Activated CD8-positive, alpha-beta T cell treated with anti-CD3 and anti-CD28 coated beads, Interleukin-2, amount 10 ng/mL, durations not matched to agents 7 days and 5 days (primary cell): ENCODE measurements at regions of chr19 and their contacts with region 1.

Region 1: DNA sequence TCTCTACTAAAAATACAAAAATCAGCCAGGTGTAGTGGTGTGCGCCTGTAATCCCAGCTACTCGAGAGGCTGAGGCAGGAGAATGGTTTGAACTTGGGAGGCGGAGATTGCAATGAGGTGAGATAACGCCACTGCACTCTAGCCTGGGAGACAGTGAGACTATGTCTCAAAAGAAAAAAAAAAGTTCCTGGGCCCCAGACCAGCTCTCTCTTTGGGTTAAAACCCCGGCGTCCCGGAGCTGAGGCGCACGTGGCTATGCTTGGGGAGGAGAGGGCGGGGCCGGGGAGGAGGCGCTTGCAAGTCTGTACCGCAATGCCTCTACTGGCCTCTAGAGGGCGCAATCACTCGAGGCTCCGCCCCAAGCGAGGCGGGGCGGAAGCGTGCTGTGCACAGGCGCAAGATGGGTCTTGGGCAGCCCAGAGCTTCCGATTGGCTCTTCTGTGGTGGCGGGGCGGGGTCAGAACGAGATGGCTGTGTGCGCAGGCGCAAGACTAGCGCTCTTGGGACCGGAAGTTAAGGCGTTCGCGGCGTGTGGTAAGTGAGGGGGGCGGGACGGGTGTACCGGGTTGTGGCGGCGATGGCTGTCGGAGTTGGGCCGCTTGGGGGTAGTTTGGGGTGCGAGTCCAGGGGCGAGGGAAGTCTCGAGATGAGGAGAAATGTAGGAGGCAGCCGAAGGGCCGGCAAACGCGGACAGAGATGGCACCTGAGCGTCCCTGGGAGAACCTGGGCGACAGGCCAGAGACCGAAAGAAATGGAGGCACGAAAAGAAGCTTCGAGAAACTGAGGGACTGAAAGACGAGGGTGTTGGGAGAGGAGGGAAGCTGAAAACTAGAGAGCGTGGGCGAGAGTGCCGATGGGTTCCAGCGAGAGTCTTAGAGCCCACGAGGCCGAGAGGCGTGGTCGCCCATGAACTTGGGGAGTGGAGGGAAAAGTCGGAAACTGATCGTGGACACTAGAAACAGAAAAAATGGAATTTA is at the start of gene DHX34:
- DNase-seq: peak; percentile 99
- ATAC-seq: peak; percentile 99
- H3K4me3 Mint-ChIP-seq: peak within 1 kb of the TSS; percentile 97
- H3K27ac Mint-ChIP-seq: peak within 1 kb of the TSS; percentile 93
- H3K4me1 Mint-ChIP-seq: peaks cover 37% of the 10 kb centered on the region
- H3K27me3 Mint-ChIP-seq: no peaks in the 10 kb centered on the region
- total RNA-seq, gene DHX34: 12.6 to 13.1 TPM

Region 2: GRCh38 chr19:47315125-47315821 is 33.8 kb before region 1 on chr19:
- CTCF ChIA-PET with region 1: interaction called, 10 read pairs
- POLR2A ChIA-PET with region 1: no interaction called
- DNase-seq: no peak
- ATAC-seq: no peak
- H3K4me3 Mint-ChIP-seq: no peak overlapping the region
- H3K27ac Mint-ChIP-seq: no peak overlapping the region
- H3K4me1 Mint-ChIP-seq: no peaks in the 10 kb centered on the region
- H3K27me3 Mint-ChIP-seq: peaks cover 7% of the 10 kb centered on the region

Region 3: GRCh38 chr19:47336853-47337279 is 12.2 kb before region 1 on chr19:
- CTCF ChIA-PET with region 1: interaction called, 22 read pairs
- POLR2A ChIA-PET with region 1: interaction called, 3 read pairs
- DNase-seq: peak; percentile 50
- ATAC-seq: peak; percentile 15
- H3K4me3 Mint-ChIP-seq: no peak overlapping the region
- H3K27ac Mint-ChIP-seq: peak overlapping the region; percentile 64
- H3K4me1 Mint-ChIP-seq: peaks cover 8% of the 10 kb centered on the region
- H3K27me3 Mint-ChIP-seq: no peaks in the 10 kb centered on the region

Region 4: GRCh38 chr19:47391510-47392223 is 42.6 kb after region 1 on chr19:
- CTCF ChIA-PET with region 1: interaction called, 15 read pairs
- POLR2A ChIA-PET with region 1: interaction called, 3 read pairs
- DNase-seq: peak; percentile 88
- ATAC-seq: peak; percentile 93
- H3K4me3 Mint-ChIP-seq: no peak overlapping the region
- H3K27ac Mint-ChIP-seq: no peak overlapping the region
- H3K4me1 Mint-ChIP-seq: peaks cover 4% of the 10 kb centered on the region
- H3K27me3 Mint-ChIP-seq: peaks cover 8% of the 10 kb centered on the region

Region 5: GRCh38 chr19:47414469-47414868 is 65.4 kb after region 1 on chr19:
- CTCF ChIA-PET with region 1: no interaction called
- POLR2A ChIA-PET with region 1: no interaction called
- DNase-seq: no peak
- ATAC-seq: no peak
- H3K4me3 Mint-ChIP-seq: no peak overlapping the region
- H3K27ac Mint-ChIP-seq: no peak overlapping the region
- H3K4me1 Mint-ChIP-seq: peaks cover 14% of the 10 kb centered on the region
- H3K27me3 Mint-ChIP-seq: peaks cover 47% of the 10 kb centered on the region

Region 6: GRCh38 chr19:47507924-47508553 is 158.9 kb after region 1 on chr19:
- CTCF ChIA-PET with region 1: no interaction called
- POLR2A ChIA-PET with region 1: no interaction called
- DNase-seq: no peak
- ATAC-seq: no peak
- H3K4me3 Mint-ChIP-seq: no peak overlapping the region
- H3K27ac Mint-ChIP-seq: no peak overlapping the region
- H3K4me1 Mint-ChIP-seq: peaks cover 22% of the 10 kb centered on the region
- H3K27me3 Mint-ChIP-seq: no peaks in the 10 kb centered on the region